Gastrocnemius medialis (tissue), 4 donors: ENCODE measurements at regions of chr5 and their contacts with region 1.

Region 1: DNA sequence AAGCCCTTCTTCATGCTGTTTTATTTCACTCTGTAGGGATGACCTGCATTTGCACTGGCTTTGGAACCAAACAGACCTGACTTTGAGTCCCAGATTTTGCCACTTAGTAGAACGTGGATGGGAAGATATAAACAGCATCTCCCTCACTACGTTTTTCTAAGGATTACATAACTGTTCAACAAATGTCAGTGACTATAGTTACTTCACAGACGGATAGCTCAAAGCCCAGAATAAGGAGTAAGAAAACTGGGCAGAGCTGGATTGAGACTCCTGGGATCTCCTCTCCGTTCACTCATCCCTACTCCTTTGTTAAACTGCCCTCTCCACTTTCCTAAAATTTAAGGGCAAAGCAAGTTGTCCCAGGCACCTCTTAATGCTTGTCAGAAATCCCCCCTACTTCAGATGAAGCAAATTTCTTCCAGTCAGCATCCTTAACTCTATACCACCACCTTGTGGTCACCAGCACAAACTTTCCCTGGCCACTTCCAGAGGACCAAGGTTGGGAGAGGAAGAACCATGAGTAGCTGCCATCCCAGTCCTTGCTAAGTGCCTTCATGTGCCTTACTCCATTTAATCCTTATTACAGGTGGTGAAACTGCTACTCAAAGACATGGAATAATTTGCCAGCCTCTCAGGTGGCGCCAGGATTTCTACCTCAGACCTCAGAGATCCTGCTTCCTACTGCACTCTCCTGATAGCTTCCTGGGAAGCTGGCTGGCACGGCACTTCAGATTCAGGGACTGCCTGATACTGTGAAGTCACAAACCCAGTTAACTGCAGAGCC is 38.4 kb downstream of the EGR1 start:
- DNase-seq: no peak
- ATAC-seq: peak; percentile 70 to 74
- H3K4me3 ChIP-seq: no peak overlapping the region
- H3K27ac ChIP-seq: peak overlapping the region in 2 of 4 donors; percentile 26 to 60
- H3K4me1 ChIP-seq: peaks cover 12 to 16% of the 10 kb centered on the region in 2 donors
- H3K27me3 ChIP-seq: no peaks in the 10 kb centered on the region
- CTCF ChIP-seq: peak; percentile 70 to 86 (median 80)
- POLR2A ChIP-seq: no peak

Region 2: GRCh38 chr5:138449501-138450239 is 54.0 kb before region 1 on chr5:
- in situ Hi-C with region 1: loop called in 3 of 4 experiments (anchors 5 to 10 kb)
- intact Hi-C with region 1: loop called (anchors 1 kb)
- DNase-seq: peak; percentile 70 to 81
- ATAC-seq: peak; percentile 91 to 97
- H3K4me3 ChIP-seq: no peak overlapping the region
- H3K27ac ChIP-seq: no peak overlapping the region
- H3K4me1 ChIP-seq: peaks cover 0 to 7% of the 10 kb centered on the region in 2 donors
- H3K27me3 ChIP-seq: no peaks in the 10 kb centered on the region
- CTCF ChIP-seq: peak; percentile 91 to 96 (median 94)
- POLR2A ChIP-seq: no peak